ENCODE measurements at regions of chr1 and their contacts with region 1.

Region 1: GRCh38 chr1:209268479-209268878 is 315.0 kb upstream of the CAMK1G start:
- DNase-seq: no peak
- H3K4me3 Mint-ChIP-seq: no peak overlapping the region
- H3K27ac Mint-ChIP-seq: no peak overlapping the region
- H3K4me1 Mint-ChIP-seq: no peaks in the 10 kb centered on the region
- H3K27me3 Mint-ChIP-seq: peaks cover 20% of the 10 kb centered on the region
- CTCF ChIP-seq: no peak

Region 2: DNA sequence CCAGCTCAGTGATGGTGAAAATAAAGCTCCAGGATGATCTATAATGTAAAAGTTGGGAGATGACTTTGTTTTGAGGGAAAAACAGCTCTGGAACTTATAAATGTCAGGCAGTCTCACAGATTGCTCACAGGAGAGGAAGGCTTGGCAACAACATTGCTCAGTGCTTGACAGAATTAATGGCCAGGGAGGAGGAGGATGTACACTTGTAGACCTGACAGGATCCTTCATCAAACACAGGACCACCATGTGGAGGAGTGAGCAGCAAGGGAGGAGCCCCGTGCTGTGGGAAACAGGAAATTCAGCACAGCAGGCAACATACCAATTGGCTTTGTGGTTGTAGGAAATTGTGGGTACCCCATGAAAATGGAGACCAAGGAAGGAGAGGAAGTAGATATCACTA is 23.2 kb after region 1 on chr1:
- CTCF ChIA-PET with region 1: no interaction called
- intact Hi-C with region 1: loop called (anchors 2 kb)
- DNase-seq: no peak
- H3K4me3 Mint-ChIP-seq: no peak overlapping the region
- H3K27ac Mint-ChIP-seq: no peak overlapping the region
- H3K4me1 Mint-ChIP-seq: no peaks in the 10 kb centered on the region
- H3K27me3 Mint-ChIP-seq: peaks cover 84% of the 10 kb centered on the region
- CTCF ChIP-seq: no peak